ENCODE measurements at regions of chrX and their contacts with region 1.

Region 1: DNA sequence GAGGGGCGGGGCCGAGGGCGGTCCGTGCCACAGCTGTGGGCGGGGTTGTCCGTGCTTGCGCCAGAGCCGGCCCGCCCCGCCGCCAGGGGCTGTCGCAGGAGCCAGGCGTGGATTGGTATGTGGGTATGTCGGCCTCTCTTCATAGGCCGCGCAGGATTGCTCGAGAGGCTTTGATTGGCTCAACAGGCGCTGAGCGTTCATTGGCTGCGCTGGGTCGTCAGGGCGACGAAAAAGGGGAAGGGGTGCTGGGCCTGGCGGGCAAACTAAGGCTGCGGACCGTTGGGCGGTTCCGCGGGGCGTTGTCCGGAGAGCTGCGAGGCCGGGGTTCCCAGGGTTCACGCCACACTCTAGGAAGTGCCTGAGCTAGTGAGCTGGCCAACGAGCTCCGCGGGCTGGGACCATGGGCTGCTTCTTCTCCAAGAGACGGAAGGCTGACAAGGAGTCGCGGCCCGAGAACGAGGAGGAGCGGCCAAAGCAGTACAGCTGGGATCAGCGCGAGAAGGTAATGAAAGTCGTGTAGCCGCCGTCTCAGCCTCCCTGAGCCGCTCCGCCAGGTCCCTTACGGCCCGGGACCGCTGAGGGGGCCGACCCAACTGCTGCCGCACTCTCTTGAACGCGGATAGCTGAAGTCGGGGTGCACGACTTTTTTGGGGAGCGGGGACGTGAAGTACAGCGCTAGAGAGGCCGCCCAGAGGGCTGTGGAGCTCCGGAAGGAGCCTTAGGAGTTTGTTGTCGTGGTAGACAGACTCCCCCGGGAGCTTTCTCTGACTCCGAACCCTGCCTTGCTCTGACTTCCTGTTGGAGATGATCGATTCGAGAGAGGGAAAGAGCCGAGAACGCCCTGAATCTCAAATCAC is at the start of gene RP2:
- DNase-seq: peak; percentile 89 to 91
- ATAC-seq: peak; percentile 98 to 99 (median 99)
- H3K4me3 ChIP-seq: peak within 1 kb of the TSS; percentile 54 to 84 (median 78)
- H3K27ac ChIP-seq: peak within 1 kb of the TSS; percentile 64 to 93 (median 88)
- H3K4me1 ChIP-seq: peaks cover 0 to 45% (median 17%) of the 10 kb centered on the region in 9 donors
- H3K27me3 ChIP-seq: no peaks in the 10 kb centered on the region
- CTCF ChIP-seq: peak in 5 of 9 donors; percentile 23 to 48 (median 32)
- total RNA-seq, gene RP2: 2.4 to 5.8 (median 2.9) TPM

Region 2: DNA sequence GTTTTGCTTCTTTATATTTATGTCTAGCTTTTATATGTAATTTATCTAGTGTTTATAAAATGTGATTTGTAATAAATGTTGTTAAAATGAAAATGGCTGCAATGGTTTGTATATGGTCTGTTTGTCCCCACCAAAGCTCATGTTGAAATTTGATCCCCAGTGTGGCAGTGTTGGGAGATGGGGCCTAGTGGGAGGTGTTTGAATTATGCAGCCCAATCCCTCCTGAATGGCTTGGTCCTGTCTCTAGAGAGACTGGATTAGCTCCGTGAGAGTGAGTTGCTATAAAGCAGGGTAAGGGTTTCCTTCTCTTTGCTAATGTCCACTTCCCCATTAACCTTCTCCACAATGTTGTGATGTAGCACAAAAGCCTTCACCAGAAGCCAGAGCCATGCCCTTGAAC is 45.3 kb after region 1 on chrX:
- intact Hi-C with region 1: loop called in 1 of 10 experiments (anchors 10 kb)
- DNase-seq: no peak
- ATAC-seq: no peak
- H3K4me3 ChIP-seq: no peak overlapping the region
- H3K27ac ChIP-seq: no peak overlapping the region
- H3K4me1 ChIP-seq: no peaks in the 10 kb centered on the region
- H3K27me3 ChIP-seq: peaks cover 0 to 10% (median 0%) of the 10 kb centered on the region in 7 donors
- CTCF ChIP-seq: no peak

Region 3: DNA sequence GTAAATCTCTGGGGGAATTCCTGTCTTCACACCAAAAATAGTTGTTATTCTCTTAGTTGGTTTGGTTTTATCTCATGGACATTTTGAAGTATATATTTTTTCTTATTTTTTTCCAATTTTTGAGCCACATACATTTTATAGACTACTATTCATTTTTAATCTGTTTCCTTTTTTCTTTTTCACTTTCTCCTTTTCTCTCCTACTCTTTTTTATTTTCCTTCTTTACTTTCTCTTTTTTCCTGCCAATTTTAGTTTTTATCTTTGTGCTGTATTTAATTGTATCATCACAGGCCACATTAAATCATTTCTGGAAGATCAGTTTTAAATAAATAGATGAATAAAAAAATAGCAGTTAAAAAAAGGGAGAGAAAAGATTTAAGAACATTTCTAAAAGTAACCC is 61.3 kb after region 1 on chrX:
- intact Hi-C with region 1: no loop called
- DNase-seq: no peak
- ATAC-seq: no peak
- H3K4me3 ChIP-seq: no peak overlapping the region
- H3K27ac ChIP-seq: no peak overlapping the region
- H3K4me1 ChIP-seq: peaks cover 0 to 1% (median 0%) of the 10 kb centered on the region in 9 donors
- H3K27me3 ChIP-seq: peaks cover 0 to 66% (median 0%) of the 10 kb centered on the region in 7 donors
- CTCF ChIP-seq: no peak

Measured in heart right ventricle (tissue), 16 donors.